Mammary epithelial cell (primary cell): ENCODE measurements at regions of chr4 and their contacts with region 1.

Region 1: GRCh38 chr4:139167774-139168444 is 9.1 kb downstream of the ELF2 start:
- DNase-seq: peak; percentile 94
- H3K4me3 ChIP-seq: peak overlapping the region in 1 of 3 experiments; percentile 20
- H3K27ac ChIP-seq: peak overlapping the region; percentile 97
- H3K4me1 ChIP-seq: peaks cover 24% of the 10 kb centered on the region
- H3K27me3 ChIP-seq: no peaks in the 10 kb centered on the region
- CTCF ChIP-seq: peak; percentile 55 to 75

Region 2: GRCh38 chr4:138659812-138660316 is 508.0 kb before region 1 on chr4:
- CTCF ChIA-PET with region 1: no interaction called
- dilution Hi-C with region 1: no loop called
- in situ Hi-C with region 1: no loop called
- intact Hi-C with region 1: no loop called
- DNase-seq: peak; percentile 27
- H3K4me3 ChIP-seq: no peak overlapping the region
- H3K27ac ChIP-seq: no peak overlapping the region
- H3K4me1 ChIP-seq: peaks cover 3% of the 10 kb centered on the region
- H3K27me3 ChIP-seq: no peaks in the 10 kb centered on the region
- CTCF ChIP-seq: no peak

Region 3: DNA sequence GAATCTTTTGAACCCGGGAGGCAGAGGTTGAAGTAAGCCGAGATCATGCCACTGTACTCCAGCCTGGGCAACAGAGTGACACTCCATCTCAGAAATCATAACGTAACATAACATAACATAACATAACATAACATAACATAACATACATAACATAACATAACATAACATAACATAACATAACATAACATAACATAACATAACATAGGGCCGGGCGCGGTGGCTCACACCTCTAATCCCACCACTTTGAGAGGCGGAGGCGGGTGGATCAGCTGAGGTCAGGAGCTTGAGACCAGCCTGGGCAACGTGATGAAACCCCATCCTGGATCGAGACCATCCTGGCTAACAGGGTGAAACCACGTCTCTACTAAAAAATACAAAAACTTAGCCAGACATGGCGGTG is 75.6 kb before region 1 on chr4:
- CTCF ChIA-PET with region 1: interaction called, 4 read pairs
- dilution Hi-C with region 1: no loop called
- in situ Hi-C with region 1: loop called in 1 of 2 experiments (anchors 5 kb)
- intact Hi-C with region 1: no loop called
- DNase-seq: no peak
- H3K4me3 ChIP-seq: no peak overlapping the region
- H3K27ac ChIP-seq: no peak overlapping the region
- H3K4me1 ChIP-seq: no peaks in the 10 kb centered on the region
- H3K27me3 ChIP-seq: no peaks in the 10 kb centered on the region
- CTCF ChIP-seq: no peak

Region 4: GRCh38 chr4:139099366-139099982 is 68.4 kb before region 1 on chr4:
- CTCF ChIA-PET with region 1: interaction called, 9 read pairs
- dilution Hi-C with region 1: no loop called
- in situ Hi-C with region 1: loop called in 1 of 2 experiments (anchors 5 kb)
- intact Hi-C with region 1: loop called (anchors 1 kb)
- DNase-seq: peak; percentile 70
- H3K4me3 ChIP-seq: no peak overlapping the region
- H3K27ac ChIP-seq: no peak overlapping the region
- H3K4me1 ChIP-seq: no peaks in the 10 kb centered on the region
- H3K27me3 ChIP-seq: no peaks in the 10 kb centered on the region
- CTCF ChIP-seq: peak; percentile 88 to 93

Region 5: DNA sequence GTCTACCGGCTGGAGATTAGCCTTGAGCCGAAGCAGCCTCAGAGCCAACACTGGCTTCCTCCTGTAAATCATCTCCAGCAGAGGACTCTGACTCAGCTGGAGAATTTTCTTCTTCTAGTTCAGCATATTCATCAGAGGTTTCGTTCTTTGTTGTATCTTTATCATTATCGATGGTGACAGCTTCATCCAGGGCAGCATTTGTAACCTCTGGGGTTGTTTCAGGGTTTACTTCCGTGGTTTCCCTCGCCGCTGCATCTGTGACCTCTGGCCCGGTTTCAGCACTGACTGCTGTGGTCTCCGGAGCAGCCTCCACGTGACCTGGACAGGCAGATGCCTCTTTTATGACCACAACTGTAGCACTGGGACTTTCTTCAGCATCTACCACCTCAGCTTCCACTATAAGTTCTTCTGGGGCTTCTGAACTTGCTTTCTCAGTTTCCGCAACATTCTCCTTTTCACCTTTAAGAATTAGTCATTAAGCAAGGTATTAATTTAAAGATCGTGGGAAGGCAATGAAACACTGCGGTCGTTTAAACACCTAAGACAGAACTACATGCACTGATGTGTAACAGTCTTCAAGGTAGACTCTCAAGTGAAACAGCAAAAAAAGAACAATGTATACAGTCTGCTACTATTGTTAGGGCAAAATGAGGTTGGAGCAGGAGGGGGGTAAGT is 98.8 kb after region 1 on chr4:
- CTCF ChIA-PET with region 1: no interaction called
- dilution Hi-C with region 1: no loop called
- in situ Hi-C with region 1: no loop called
- intact Hi-C with region 1: no loop called
- DNase-seq: no peak
- H3K4me3 ChIP-seq: peak overlapping the region; percentile 17 to 29 (median 21)
- H3K27ac ChIP-seq: peak overlapping the region; percentile 28
- H3K4me1 ChIP-seq: peaks cover 10% of the 10 kb centered on the region
- H3K27me3 ChIP-seq: no peaks in the 10 kb centered on the region
- CTCF ChIP-seq: no peak